Activated CD8-positive, alpha-beta T cell treated with anti-CD3 and anti-CD28 coated beads for 36 hours (primary cell): ENCODE measurements at regions of chr7 and their contacts with region 1.

Region 1: GRCh38 chr7:150898475-150899011 is 46.2 kb downstream of the AOC1 start:
- DNase-seq: peak; percentile 85
- ATAC-seq: peak; percentile 89
- H3K4me3 Mint-ChIP-seq: no peak overlapping the region
- H3K27ac Mint-ChIP-seq: no peak overlapping the region
- H3K4me1 Mint-ChIP-seq: peaks cover 14% of the 10 kb centered on the region
- H3K27me3 Mint-ChIP-seq: peaks cover 58% of the 10 kb centered on the region
- CTCF ChIP-seq: peak; percentile 98

Region 2: GRCh38 chr7:150909200-150909995 is 10.9 kb after region 1 on chr7:
- CTCF ChIA-PET with region 1: interaction called, 24 read pairs
- POLR2A ChIA-PET with region 1: no interaction called
- intact Hi-C with region 1: no loop called
- DNase-seq: peak; percentile 69
- ATAC-seq: peak; percentile 83
- H3K4me3 Mint-ChIP-seq: no peak overlapping the region
- H3K27ac Mint-ChIP-seq: no peak overlapping the region
- H3K4me1 Mint-ChIP-seq: peaks cover 8% of the 10 kb centered on the region
- H3K27me3 Mint-ChIP-seq: peaks cover 16% of the 10 kb centered on the region
- CTCF ChIP-seq: no peak

Region 3: DNA sequence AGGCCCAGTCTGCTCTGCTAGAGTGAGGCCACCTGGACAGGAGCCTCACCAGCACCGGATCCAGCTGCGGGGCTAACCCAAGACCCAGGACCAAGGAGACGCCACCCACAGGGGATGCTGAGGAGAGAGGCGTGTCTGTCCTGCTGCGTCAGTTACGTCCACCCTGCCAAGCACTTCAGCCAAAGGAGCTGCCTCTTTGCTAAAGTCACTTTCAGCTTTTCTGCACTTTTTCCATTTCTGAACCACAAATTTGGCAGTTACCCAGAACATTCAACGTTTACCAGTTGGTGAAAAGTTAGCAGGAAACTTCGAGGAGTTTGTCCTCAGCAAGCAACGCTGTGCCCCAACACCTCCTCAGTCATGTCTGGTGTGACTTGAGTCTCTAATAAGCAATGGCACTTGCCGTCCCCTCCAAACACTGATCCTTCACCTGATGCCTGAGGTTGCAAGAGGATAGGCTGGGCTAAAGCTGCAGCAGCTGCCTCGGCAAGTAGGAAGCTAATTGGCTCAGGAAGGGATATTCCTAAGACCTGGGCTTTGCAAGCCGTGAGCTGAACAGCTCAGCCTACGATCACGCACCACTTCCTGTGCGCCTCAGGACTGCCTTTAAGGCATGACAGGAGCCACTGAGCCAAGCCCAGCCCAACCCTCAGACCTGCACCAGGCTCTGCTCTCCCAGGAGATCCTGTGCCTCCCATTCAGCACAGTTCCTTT is 39.5 kb after region 1 on chr7:
- CTCF ChIA-PET with region 1: interaction called, 19 read pairs
- POLR2A ChIA-PET with region 1: interaction called, 4 read pairs
- intact Hi-C with region 1: loop called (anchors 5 kb)
- DNase-seq: peak; percentile 62
- ATAC-seq: peak; percentile 71
- H3K4me3 Mint-ChIP-seq: peak overlapping the region; percentile 32
- H3K27ac Mint-ChIP-seq: no peak overlapping the region
- H3K4me1 Mint-ChIP-seq: peaks cover 36% of the 10 kb centered on the region
- H3K27me3 Mint-ChIP-seq: peaks cover 2% of the 10 kb centered on the region
- CTCF ChIP-seq: no peak

Region 4: GRCh38 chr7:150988230-150989226 is 90.0 kb after region 1 on chr7:
- CTCF ChIA-PET with region 1: interaction called, 42 read pairs
- POLR2A ChIA-PET with region 1: no interaction called
- intact Hi-C with region 1: loop called (anchors 2 kb)
- DNase-seq: peak; percentile 79
- ATAC-seq: peak; percentile 76
- H3K4me3 Mint-ChIP-seq: no peak overlapping the region
- H3K27ac Mint-ChIP-seq: no peak overlapping the region
- H3K4me1 Mint-ChIP-seq: peaks cover 15% of the 10 kb centered on the region
- H3K27me3 Mint-ChIP-seq: peaks cover 16% of the 10 kb centered on the region
- CTCF ChIP-seq: peak; percentile 91

Region 5: GRCh38 chr7:151017953-151018420 is 119.4 kb after region 1 on chr7:
- CTCF ChIA-PET with region 1: interaction called, 15 read pairs
- POLR2A ChIA-PET with region 1: no interaction called
- intact Hi-C with region 1: no loop called
- DNase-seq: peak; percentile 89
- ATAC-seq: peak; percentile 71
- H3K4me3 Mint-ChIP-seq: peak overlapping the region; percentile 79
- H3K27ac Mint-ChIP-seq: peak overlapping the region; percentile 75
- H3K4me1 Mint-ChIP-seq: peaks cover 52% of the 10 kb centered on the region
- H3K27me3 Mint-ChIP-seq: peaks cover 10% of the 10 kb centered on the region
- CTCF ChIP-seq: peak; percentile 99

Region 6: GRCh38 chr7:151271699-151272355 is 373.3 kb after region 1 on chr7:
- CTCF ChIA-PET with region 1: no interaction called
- POLR2A ChIA-PET with region 1: no interaction called
- intact Hi-C with region 1: no loop called
- DNase-seq: no peak
- ATAC-seq: no peak
- H3K4me3 Mint-ChIP-seq: no peak overlapping the region
- H3K27ac Mint-ChIP-seq: no peak overlapping the region
- H3K4me1 Mint-ChIP-seq: peaks cover 25% of the 10 kb centered on the region
- H3K27me3 Mint-ChIP-seq: no peaks in the 10 kb centered on the region
- CTCF ChIP-seq: no peak